Activated B cell treated with CpG ODN at 0.5 μM for 24 hours (primary cell): ENCODE measurements at regions of chr2 and their contacts with region 1.

Region 1: GRCh38 chr2:65103013-65103715 is 26.7 kb downstream of the RAB1A start:
- DNase-seq: no peak
- ATAC-seq: no peak
- H3K4me3 Mint-ChIP-seq: no peak overlapping the region
- H3K27ac Mint-ChIP-seq: no peak overlapping the region
- H3K4me1 Mint-ChIP-seq: peaks cover 14% of the 10 kb centered on the region
- H3K27me3 Mint-ChIP-seq: no peaks in the 10 kb centered on the region
- CTCF ChIP-seq: no peak

Region 2: DNA sequence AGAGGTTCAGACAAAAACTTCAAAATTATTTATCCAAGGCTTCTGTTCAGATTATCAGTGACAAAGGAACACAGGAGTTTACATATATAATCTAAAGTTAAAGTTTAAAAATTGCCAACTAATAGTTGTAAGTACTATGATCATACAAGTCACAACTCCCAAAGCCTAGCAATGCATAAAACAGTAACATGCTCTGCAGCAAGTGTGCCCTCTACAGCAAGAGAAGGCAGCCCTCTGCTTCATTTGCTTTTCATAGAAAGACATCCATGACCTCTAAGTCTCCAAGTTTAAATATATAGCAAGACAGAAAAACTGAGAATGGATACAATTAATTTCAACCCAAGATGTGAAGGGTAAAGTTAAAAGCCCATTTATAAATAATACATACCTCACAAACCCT is 13.5 kb after region 1 on chr2:
- CTCF ChIA-PET with region 1: no interaction called
- POLR2A ChIA-PET with region 1: no interaction called
- intact Hi-C with region 1: loop called (anchors 2 kb)
- DNase-seq: no peak
- ATAC-seq: no peak
- H3K4me3 Mint-ChIP-seq: no peak overlapping the region
- H3K27ac Mint-ChIP-seq: no peak overlapping the region
- H3K4me1 Mint-ChIP-seq: peaks cover 70% of the 10 kb centered on the region
- H3K27me3 Mint-ChIP-seq: no peaks in the 10 kb centered on the region
- CTCF ChIP-seq: no peak

Region 3: DNA sequence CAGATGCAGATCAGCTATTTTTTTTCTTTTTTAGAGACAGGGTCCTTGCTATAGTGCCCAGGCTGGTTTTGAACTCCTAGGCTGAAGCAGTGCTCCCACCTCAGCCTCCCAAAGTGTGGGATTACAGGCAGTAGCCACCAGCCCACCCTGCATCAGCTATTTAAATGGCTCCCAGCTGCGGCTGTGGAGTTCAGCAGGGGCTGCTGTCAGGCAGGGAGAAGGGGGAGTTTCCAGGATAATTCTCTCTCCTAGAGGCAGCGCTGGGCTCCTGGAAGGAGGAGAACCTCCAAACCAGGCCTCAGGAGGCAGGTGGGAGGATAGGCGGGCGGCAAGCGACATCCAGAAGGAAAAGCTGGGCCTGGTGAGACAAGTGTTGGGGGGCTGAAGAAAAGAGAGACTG is 190.2 kb after region 1 on chr2:
- CTCF ChIA-PET with region 1: no interaction called
- POLR2A ChIA-PET with region 1: interaction called, 11 read pairs
- intact Hi-C with region 1: no loop called
- DNase-seq: no peak
- ATAC-seq: no peak
- H3K4me3 Mint-ChIP-seq: no peak overlapping the region
- H3K27ac Mint-ChIP-seq: no peak overlapping the region
- H3K4me1 Mint-ChIP-seq: no peaks in the 10 kb centered on the region
- H3K27me3 Mint-ChIP-seq: peaks cover 18% of the 10 kb centered on the region
- CTCF ChIP-seq: no peak